Activated T-helper 1 cell treated with anti-CD3 and anti-CD28 coated beads, Interleukin-12 subunit alpha, Interleukin-12 subunit beta, Interleukin-2, Interleukin-4 antibody, amounts not matched to agents 30 ng/mL and 10 ng/mL and 1 ng/mL, durations not matched to agents 14 hours and 24 hours and 36 hours (primary cell): ENCODE measurements at regions of chr17 and their contacts with region 1.

Region 1: DNA sequence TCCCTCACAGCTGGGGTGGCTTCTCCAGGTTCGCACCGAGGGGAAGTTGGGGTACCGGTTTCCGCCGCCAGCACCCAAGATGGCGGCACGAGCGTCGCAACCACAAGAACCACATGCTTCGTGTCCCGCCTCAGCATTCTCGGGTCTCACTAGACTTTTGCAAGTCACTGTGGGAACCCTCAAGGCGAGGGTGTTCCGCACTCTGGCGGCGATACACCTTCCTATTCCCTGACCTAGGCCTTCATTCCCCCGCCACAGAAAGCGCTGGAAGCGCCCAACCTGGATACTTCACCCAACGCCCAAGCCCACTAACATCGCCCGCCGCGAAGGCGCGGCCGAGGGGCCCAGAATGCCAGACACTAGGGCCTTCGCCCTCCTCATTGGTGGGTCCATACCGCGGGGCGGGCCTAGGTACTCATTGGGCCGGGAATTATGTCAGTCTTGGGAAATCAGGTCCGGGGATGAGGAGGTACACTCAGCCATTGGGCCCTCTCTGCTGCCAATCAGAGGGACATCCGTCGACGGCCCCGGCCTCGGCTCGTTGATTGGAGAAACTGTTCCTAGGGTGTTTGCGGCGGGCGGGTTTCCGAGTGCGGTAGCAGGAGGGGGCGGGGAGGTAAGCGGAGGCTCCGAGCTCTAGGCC is at the start of gene NFE2L1:
- DNase-seq: peak; percentile 97
- H3K4me3 Mint-ChIP-seq: peak within 1 kb of the TSS; percentile 99
- H3K27ac Mint-ChIP-seq: peak within 1 kb of the TSS; percentile 100
- H3K4me1 Mint-ChIP-seq: peaks cover 69% of the 10 kb centered on the region
- H3K27me3 Mint-ChIP-seq: peaks cover 1% of the 10 kb centered on the region
- total RNA-seq, gene NFE2L1: 86.6 and 92.0 TPM in 2 replicates

Region 2: DNA sequence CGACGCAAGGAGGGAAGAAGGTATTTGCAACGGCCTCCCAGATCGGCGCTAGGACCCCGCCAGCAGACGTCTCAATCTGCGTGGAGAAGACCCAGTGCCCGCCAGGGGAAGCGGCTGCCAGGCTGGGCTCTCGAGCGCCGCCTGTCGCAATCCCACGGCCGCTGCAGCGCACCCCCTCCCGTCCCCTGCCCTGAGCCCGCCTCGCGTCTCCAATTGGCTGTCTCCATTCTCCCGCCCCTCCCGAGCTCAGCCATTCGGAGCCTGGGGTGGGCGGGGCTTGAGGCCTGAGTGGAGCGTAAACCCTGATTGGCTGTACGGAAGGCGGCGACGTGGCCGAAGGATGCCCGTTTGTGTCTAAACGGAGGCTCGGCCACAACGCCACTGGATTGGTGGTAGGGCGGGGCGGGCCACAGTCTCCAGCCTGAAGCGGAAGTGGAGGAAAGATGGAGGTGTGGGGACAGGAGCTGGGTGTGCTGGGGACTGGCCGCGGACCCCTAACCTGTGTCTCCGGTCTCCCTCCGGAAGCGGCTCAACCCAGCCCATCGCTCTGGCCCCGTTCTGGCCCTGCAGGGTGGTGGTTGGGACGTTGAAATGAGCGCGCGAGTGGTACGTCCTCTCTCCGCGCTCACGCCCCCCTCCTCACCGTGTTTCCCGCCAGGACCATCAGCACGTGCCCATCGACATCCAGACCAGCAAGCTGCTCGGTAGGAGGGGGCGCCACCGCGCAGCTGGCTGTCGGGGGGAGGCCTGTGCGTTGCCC is 77.0 kb before region 1 on chr17 and contains the start of gene CDK5RAP3:
- intact Hi-C with region 1: loop called (anchors 1 kb)
- DNase-seq: peak; percentile 100
- H3K4me3 Mint-ChIP-seq: peak within 1 kb of the TSS; percentile 89
- H3K27ac Mint-ChIP-seq: peak within 1 kb of the TSS; percentile 93
- H3K4me1 Mint-ChIP-seq: peaks cover 31% of the 10 kb centered on the region
- H3K27me3 Mint-ChIP-seq: peaks cover 2% of the 10 kb centered on the region
- total RNA-seq, gene CDK5RAP3: 190 and 200 TPM in 2 replicates

Region 3: GRCh38 chr17:48037036-48037837 is 10.6 kb before region 1 on chr17 and contains the start of gene COPZ2:
- intact Hi-C with region 1: loop called (anchors 1 kb)
- DNase-seq: peak; percentile 56
- H3K4me3 Mint-ChIP-seq: peak within 1 kb of the TSS; percentile 84
- H3K27ac Mint-ChIP-seq: peak within 1 kb of the TSS; percentile 78
- H3K4me1 Mint-ChIP-seq: peaks cover 14% of the 10 kb centered on the region
- H3K27me3 Mint-ChIP-seq: peaks cover 35% of the 10 kb centered on the region
- total RNA-seq, gene COPZ2: 3.4 and 5.8 TPM in 2 replicates

Region 4: DNA sequence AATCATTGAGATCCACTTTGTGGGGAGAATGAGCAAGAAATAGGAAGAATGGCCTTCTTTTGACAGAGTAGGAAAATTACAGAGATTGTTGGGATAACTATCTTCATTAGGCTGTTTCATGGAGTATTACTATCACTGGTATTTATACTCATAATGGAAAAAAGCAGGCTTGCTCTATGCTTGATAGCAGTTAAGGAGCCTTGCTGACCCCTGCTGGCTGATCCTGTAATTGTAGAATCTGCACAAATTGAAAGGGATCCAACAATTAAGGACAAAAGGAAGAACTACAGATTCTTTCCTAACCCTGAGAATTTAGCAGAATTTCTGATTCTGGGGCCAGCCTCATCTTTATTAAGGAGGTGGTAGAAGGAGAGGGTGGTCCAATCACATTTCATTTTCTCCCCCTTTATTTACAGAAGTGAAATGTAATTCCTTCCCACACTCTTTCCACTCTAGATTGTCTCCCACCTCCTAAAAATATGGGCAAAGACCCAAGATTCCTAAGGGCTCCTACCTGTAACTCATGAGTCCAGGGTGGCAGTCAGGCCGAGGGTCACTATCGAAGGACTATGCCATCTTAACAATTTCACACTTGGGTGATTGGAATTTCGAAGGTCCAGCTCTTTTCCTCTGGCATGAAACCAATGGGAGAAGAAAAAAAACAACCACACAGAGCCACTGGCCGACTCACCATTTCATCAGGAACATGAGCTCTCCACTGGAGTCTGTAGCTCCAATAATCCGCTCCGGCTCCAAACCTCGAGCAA is 26.6 kb after region 1 on chr17:
- intact Hi-C with region 1: loop called (anchors 1 kb)
- DNase-seq: peak; percentile 59
- H3K4me3 Mint-ChIP-seq: no peak overlapping the region
- H3K27ac Mint-ChIP-seq: no peak overlapping the region
- H3K4me1 Mint-ChIP-seq: no peaks in the 10 kb centered on the region
- H3K27me3 Mint-ChIP-seq: no peaks in the 10 kb centered on the region

Region 5: DNA sequence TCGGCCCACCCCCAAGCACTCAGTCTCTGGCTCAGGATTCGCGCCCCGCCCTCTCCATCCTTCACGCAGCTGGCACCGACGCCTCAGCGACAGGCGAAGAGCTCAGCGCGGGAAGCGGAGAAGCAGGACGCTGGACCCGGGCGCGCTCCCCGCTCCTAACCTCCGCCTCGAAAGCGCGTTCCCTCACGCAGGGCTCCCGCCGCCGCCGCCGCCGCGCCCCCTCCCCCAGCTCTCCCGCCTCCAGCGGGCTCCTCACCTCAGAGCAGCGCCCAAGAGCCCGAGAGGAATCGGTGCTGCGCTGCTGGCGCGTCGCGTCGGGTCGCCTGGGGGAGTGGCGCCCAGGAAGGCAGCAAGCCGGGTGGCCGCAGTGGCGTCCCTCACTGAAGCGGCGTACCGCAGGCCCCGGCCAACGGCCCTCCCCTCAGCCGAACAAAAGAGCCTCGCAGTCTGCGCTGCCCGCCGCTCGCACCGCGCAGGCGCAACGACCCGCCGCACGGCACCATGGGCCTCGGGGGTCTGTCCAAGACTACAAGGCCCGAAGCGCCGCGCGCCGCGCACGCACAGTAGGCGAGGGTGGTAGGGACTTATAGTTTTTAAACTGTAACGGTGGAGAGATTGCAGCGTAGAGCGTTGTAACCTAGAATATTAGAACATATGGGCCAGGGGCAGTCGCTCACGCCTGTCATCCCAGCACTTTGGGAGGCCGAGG is 53.3 kb after region 1 on chr17 and contains the start of gene CBX1:
- intact Hi-C with region 1: loop called (anchors 1 kb)
- DNase-seq: peak; percentile 91
- H3K4me3 Mint-ChIP-seq: peak within 1 kb of the TSS; percentile 97
- H3K27ac Mint-ChIP-seq: peak within 1 kb of the TSS; percentile 91
- H3K4me1 Mint-ChIP-seq: peaks cover 42% of the 10 kb centered on the region
- H3K27me3 Mint-ChIP-seq: no peaks in the 10 kb centered on the region
- total RNA-seq, gene CBX1: 61.1 and 62.4 TPM in 2 replicates

Region 6: GRCh38 chr17:48107168-48108132 is 59.6 kb after region 1 on chr17 and contains the start of gene SNX11:
- intact Hi-C with region 1: loop called (anchors 1 kb)
- DNase-seq: peak; percentile 91
- H3K4me3 Mint-ChIP-seq: peak within 1 kb of the TSS; percentile 100
- H3K27ac Mint-ChIP-seq: peak within 1 kb of the TSS; percentile 99
- H3K4me1 Mint-ChIP-seq: peaks cover 63% of the 10 kb centered on the region
- H3K27me3 Mint-ChIP-seq: no peaks in the 10 kb centered on the region
- total RNA-seq, gene SNX11: 31.1 and 37.1 TPM in 2 replicates